GM10248 (cell line): ENCODE measurements at regions of chr5 and their contacts with region 1.

Region 1: GRCh38 chr5:132205385-132206125 is 22.1 kb downstream of the P4HA2 start:
- DNase-seq: peak; percentile 32
- CTCF ChIP-seq: no peak

Region 2: GRCh38 chr5:132115375-132115774 is 90.2 kb before region 1 on chr5:
- CTCF ChIA-PET with region 1: no interaction called
- POLR2A ChIA-PET with region 1: no interaction called
- DNase-seq: no peak
- CTCF ChIP-seq: no peak

Region 3: GRCh38 chr5:132180134-132180745 is 25.3 kb before region 1 on chr5:
- CTCF ChIA-PET with region 1: interaction called, 24 read pairs
- POLR2A ChIA-PET with region 1: no interaction called
- DNase-seq: peak; percentile 64
- CTCF ChIP-seq: peak; percentile 63

Region 4: GRCh38 chr5:132190161-132190817 is 15.3 kb before region 1 on chr5:
- CTCF ChIA-PET with region 1: interaction called, 37 read pairs
- POLR2A ChIA-PET with region 1: no interaction called
- DNase-seq: peak; percentile 63
- CTCF ChIP-seq: peak; percentile 52

Region 5: DNA sequence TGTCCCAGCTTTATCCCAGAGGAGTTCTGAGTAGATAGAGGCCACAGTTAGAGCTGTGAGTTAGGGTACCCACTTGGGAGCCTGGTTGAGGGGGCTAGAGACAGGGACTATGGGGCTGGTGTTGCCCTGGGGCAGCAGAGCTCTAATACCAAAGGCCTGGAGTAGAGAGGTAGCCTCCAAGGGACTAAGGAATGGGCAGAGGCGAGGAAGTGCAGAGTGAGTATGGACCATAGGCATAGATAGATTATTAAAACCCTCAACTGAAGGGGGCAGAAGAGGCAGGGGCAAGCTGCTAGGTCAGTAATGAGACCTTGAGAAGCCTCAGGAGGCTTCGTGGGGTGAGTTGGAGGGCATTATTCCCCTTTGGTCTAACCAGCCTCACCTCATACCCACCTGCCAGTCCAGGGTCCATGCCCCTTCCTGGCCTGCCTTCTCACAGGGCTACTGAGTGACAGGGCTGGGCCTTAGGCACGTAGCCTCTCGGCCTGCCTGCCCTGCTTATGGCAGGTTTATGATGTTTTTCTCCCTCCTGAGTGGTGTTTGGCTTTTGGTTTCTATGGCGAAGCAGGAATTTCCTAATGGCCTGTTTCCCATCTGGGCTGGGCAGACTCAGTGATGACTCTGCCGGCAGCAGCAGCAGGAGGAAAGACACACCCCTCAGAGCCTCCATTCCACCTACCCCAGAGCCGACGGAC is 59.9 kb after region 1 on chr5:
- CTCF ChIA-PET with region 1: no interaction called
- POLR2A ChIA-PET with region 1: no interaction called
- DNase-seq: peak; percentile 8
- CTCF ChIP-seq: no peak

Region 6: DNA sequence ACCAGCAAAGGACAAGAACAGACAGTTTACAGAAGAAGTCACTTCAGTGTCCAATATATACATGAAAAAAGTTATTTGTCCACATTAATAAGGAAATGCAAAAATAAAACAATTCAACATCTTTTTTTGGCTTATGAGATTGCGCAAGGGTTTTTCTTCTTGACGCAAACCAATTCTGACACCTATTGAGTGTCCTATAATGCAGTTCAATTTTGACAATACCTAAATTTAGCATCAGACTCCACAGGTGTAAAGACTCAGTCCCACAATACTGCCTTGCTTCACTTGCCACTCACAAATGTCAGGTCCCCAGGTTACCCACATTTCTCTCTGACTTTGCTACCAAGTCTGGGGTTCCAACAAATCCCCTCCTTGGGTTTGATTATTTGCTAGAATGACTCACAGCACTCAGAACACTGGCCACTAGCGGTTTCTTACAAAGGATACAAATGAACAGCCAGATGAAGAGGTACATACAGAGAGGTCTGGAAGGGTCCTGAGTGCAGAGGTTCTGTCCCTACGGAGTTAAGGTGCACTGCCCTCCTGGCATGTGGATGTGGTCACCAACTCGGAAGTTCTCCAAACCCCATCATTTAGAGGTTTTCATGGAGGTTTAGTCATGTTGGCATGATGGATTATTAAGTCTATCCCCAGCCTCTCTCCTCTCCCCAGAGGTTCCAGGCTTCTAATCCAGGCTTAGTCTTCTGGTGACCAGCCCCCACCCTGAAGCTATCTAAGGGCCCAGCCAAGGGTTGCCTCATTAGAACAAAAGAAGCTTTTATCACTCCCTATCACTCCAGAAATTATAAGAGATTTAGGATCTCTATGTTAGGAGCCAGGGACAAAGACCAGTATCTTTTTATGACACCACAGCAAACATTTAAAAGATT is 137.0 kb after region 1 on chr5:
- CTCF ChIA-PET with region 1: no interaction called
- POLR2A ChIA-PET with region 1: no interaction called
- DNase-seq: no peak
- CTCF ChIP-seq: no peak